Activated CD8-positive, alpha-beta T cell treated with anti-CD3 and anti-CD28 coated beads for 36 hours (primary cell): ENCODE measurements at regions of chr15 and their contacts with region 1.

Region 1: DNA sequence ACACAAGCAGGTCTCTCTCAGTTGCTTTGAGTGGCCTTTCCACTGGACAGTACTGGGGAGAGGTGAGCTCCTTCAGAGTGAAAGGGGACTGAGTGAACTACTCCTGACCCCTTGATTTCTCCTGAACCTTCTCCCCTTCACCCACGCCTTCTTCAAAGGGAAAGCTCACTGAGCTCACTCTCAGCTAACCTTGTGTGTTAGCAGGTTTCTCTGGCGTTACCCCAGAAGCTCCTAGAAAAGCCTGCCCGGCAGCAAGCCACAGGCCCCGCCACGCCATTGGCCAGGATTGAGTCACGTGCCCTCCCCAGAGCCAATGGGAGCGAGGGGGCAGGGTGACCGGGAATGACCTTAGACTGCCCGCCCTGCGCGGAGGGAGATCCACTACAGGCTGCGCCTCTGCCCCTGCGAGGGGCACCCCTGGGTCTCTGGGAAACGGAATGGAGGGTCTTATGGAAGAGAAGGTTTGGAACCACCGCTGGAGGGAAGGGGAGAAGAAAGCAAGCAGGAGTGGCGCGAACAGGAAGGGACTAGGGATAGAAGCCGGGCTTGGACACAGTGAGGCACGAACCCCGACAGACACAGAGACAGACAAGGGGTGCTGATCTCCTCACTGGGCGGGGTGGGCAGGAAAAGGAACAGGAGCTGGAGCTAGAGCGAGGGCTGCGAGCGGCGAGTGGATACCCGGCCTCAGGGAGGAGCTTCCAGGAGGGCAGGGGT is 17.4 kb upstream of the CLK3 start:
- DNase-seq: peak; percentile 95
- ATAC-seq: peak; percentile 97
- H3K4me3 Mint-ChIP-seq: peak overlapping the region; percentile 86
- H3K27ac Mint-ChIP-seq: peak overlapping the region; percentile 98
- H3K4me1 Mint-ChIP-seq: peaks cover 24% of the 10 kb centered on the region
- H3K27me3 Mint-ChIP-seq: no peaks in the 10 kb centered on the region
- CTCF ChIP-seq: no peak

Region 2: GRCh38 chr15:74451861-74452710 is 146.2 kb before region 1 on chr15:
- CTCF ChIA-PET with region 1: no interaction called
- POLR2A ChIA-PET with region 1: no interaction called
- intact Hi-C with region 1: no loop called
- DNase-seq: no peak
- ATAC-seq: no peak
- H3K4me3 Mint-ChIP-seq: no peak overlapping the region
- H3K27ac Mint-ChIP-seq: no peak overlapping the region
- H3K4me1 Mint-ChIP-seq: peaks cover 33% of the 10 kb centered on the region
- H3K27me3 Mint-ChIP-seq: no peaks in the 10 kb centered on the region
- CTCF ChIP-seq: no peak

Region 3: GRCh38 chr15:74610302-74610951 is 12.1 kb after region 1 on chr15:
- CTCF ChIA-PET with region 1: interaction called, 3 read pairs
- POLR2A ChIA-PET with region 1: interaction called, 33 read pairs
- intact Hi-C with region 1: no loop called
- DNase-seq: no peak
- ATAC-seq: no peak
- H3K4me3 Mint-ChIP-seq: no peak overlapping the region
- H3K27ac Mint-ChIP-seq: no peak overlapping the region
- H3K4me1 Mint-ChIP-seq: peaks cover 4% of the 10 kb centered on the region
- H3K27me3 Mint-ChIP-seq: no peaks in the 10 kb centered on the region
- CTCF ChIP-seq: no peak

Region 4: DNA sequence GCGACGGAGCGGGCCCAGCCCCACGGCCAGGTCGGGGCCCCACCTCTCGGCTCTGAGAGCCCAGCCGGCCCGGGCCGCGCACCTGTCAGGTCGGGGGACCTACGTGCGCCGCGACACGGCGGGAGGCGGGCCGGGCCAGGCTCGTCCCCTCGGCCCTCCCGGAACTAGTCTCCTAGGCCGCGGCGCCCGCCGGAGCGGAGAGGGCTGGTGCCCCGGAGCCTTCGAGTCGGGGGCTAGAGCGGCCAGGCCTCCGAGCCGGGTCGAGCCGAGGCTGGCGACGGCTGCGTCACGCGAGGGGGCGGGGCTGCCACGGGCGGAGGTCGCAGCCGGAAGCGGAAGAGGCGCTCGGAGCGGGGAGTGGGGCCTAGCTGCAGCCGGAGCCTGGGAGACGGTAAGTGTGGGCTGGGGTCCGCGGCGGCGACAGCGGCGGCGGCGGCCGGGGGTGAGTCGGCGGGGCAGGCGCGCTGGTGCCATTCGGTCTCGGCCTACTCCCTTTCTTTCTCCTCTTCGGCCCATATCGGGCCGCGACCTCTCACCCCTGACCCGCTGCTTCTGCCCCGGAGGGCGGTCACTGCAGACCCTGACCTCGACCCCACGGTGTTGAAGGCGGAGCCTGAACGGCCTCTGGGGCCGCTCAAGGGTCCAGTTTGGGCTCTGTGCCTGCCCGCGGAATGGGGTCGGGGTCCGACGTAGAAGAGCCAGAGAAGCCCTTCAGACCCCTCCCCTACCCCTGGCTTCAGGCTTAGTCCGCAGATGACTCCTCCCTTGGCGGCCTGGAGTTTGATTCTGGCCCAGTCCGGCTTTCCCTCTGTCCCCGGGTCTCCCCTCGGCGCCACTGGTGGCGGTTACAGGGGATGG is 17.5 kb after region 1 on chr15 and contains the start of gene CLK3:
- CTCF ChIA-PET with region 1: no interaction called
- POLR2A ChIA-PET with region 1: interaction called, 33 read pairs
- intact Hi-C with region 1: no loop called
- DNase-seq: peak; percentile 97
- ATAC-seq: peak; percentile 88
- H3K4me3 Mint-ChIP-seq: peak within 1 kb of the TSS; percentile 92
- H3K27ac Mint-ChIP-seq: peak within 1 kb of the TSS; percentile 98
- H3K4me1 Mint-ChIP-seq: peaks cover 43% of the 10 kb centered on the region
- H3K27me3 Mint-ChIP-seq: no peaks in the 10 kb centered on the region
- CTCF ChIP-seq: no peak
- total RNA-seq, gene CLK3: 159 to 168 TPM

Region 5: GRCh38 chr15:74620636-74621545 is 22.6 kb after region 1 on chr15:
- CTCF ChIA-PET with region 1: interaction called, 11 read pairs
- POLR2A ChIA-PET with region 1: interaction called, 4 read pairs
- intact Hi-C with region 1: no loop called
- DNase-seq: peak; percentile 89
- ATAC-seq: peak; percentile 96
- H3K4me3 Mint-ChIP-seq: no peak overlapping the region
- H3K27ac Mint-ChIP-seq: peak overlapping the region; percentile 77
- H3K4me1 Mint-ChIP-seq: peaks cover 60% of the 10 kb centered on the region
- H3K27me3 Mint-ChIP-seq: no peaks in the 10 kb centered on the region
- CTCF ChIP-seq: peak; percentile 98